Right ventricle myocardium superior (tissue), 1 donor: ENCODE measurements at regions of chr2 and their contacts with region 1.

Region 1: DNA sequence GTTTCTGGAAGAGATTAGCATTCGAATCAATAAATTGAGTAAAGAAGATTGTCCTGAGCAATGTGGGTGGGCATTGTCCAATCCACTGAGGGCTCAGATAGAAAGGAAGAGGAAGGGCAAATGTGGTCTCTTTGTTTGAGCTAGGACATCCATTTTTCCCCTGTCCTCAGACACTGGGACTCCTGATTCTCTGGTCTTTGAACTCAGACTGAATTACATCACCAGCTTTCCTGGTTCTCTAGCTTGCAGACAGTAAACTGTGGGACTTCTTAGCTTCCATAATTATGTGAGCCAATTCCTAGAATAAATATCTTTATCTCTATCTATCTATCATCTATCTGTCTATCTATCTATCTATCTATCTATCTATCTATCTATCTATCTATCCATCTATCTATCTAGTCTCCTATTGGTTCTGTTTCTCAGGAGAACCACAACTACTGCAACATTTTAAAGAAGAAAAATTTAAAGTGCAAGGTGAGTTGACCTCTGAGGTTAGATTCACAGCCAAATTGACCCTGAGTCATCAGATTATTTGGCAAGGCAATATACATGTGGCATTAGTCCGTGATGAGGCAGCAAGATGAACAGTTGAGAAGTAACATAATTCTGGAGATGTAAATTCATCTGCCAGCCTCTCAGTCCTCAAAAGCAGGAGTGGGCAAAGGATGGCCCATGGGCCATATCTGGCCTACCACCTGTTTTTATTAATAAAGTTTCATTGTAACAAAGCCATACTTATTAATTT is 191.4 kb downstream of the PDE11A start:
- DNase-seq: no peak
- ATAC-seq: no peak

Region 2: DNA sequence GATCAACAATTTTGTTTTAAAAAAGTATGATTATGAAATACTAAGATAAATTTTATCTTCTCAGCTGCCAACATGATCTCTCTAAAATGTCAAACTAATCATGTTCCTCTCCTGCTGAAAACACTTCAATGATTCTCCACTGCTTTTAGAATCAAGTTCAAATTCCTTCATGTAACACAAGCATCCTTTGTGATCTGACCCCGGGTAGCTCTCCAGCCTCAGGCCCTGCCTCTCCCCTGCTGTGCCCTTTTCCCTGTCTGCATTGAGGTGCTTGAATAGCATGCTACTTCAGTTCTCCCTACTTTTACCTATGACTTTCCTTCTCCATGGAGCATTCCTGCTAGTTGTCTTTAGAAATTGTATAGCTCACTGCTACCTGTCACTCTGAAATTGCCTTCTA is 83.4 kb before region 1 on chr2:
- intact Hi-C with region 1: loop called (anchors 2 kb)
- DNase-seq: no peak
- ATAC-seq: peak; percentile 45

Region 3: GRCh38 chr2:177808984-177809809 is 72.0 kb before region 1 on chr2:
- intact Hi-C with region 1: no loop called
- DNase-seq: no peak
- ATAC-seq: no peak

Region 4: DNA sequence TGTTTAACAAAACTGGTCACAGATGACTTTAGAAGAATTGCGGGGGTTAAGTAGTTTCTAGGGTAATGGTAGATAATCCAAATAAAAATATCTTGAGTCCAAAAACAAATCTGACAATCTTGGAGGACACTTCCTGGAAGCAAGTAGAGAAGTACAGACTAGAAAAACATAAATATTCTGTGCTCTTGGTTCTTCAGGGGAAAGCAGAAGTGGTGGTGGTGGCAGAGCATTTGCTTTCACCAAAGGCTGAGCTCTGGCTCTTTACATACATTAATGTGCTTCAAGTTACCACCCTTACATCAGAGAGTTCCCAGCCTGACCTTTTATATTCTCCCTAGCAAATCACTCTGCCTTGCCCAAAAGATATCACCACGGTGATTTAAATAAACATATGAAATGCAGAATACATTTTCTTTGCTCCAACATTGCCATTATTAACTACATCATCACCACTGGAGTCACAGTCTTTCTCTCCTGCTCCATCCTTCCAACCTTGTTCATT is 176.1 kb after region 1 on chr2:
- intact Hi-C with region 1: no loop called
- DNase-seq: no peak
- ATAC-seq: no peak